CD4-positive, alpha-beta T cell (primary cell): ENCODE measurements at regions of chr5 and their contacts with region 1.

Region 1: DNA sequence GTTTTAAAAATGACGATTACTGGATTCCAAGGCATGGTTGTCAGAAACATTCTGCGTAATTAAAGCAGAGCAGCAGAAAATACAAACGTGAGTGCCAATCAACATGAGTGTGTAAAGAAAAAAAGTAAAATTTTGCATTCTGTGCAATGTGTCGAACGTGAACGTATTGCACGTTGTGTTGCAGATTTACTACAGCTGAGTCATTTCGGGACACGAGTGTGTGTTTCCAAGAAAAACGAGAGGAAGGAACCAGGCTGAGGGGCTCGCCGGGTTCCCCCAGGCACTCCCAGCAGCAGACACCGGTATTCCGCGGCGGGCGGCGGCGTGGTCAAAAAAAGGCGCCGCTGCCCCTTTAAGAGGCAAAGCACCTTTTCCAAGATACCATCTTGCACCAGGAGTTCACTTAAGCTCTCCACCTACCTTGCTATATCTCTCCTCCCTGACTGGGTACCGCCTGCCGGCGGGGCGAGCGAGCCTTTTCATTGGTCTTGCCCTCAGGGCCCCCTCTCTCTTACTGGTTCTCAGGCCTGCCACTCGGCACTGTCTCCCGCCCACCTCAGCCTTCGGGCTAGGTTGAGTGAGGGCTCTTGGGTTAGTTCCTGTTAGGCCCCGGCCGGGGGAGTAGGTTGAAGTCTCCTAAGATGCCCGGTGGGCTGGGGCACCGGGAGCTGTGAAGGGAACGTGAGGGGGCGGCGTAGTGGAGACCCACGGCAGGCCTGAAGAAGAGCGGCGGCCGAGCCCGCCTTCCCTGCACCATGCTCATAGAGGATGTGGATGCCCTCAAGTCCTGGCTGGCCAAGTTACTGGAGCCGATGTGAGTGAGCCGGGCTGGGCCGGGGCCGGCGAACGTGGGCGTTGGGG is at the start of gene RBM27:
- DNase-seq: peak; percentile 94 to 98 (median 96)
- ATAC-seq: peak; percentile 99
- H3K4me3 ChIP-seq: peak within 1 kb of the TSS; percentile 94
- H3K4me3 Mint-ChIP-seq: no peak within 1 kb of the TSS
- H3K27ac ChIP-seq: peak within 1 kb of the TSS; percentile 69 to 80
- H3K27ac Mint-ChIP-seq: no peak within 1 kb of the TSS
- H3K4me1 ChIP-seq: peaks cover 22% of the 10 kb centered on the region
- H3K4me1 Mint-ChIP-seq: peaks cover 23% of the 10 kb centered on the region
- H3K27me3 ChIP-seq: no peaks in the 10 kb centered on the region
- H3K27me3 Mint-ChIP-seq: no peaks in the 10 kb centered on the region
- CTCF ChIP-seq: no peak
- total RNA-seq, gene RBM27: 29.7 to 33.2 TPM

Region 2: GRCh38 chr5:146173597-146173996 is 29.6 kb before region 1 on chr5:
- CTCF ChIA-PET with region 1: no interaction called
- POLR2A ChIA-PET with region 1: no interaction called
- intact Hi-C with region 1: no loop called
- DNase-seq: no peak
- ATAC-seq: no peak
- H3K4me3 ChIP-seq: no peak overlapping the region
- H3K4me3 Mint-ChIP-seq: no peak overlapping the region
- H3K27ac ChIP-seq: no peak overlapping the region
- H3K27ac Mint-ChIP-seq: peak overlapping the region; percentile 21
- H3K4me1 ChIP-seq: peaks cover 3% of the 10 kb centered on the region
- H3K4me1 Mint-ChIP-seq: peaks cover 8% of the 10 kb centered on the region
- H3K27me3 ChIP-seq: no peaks in the 10 kb centered on the region
- H3K27me3 Mint-ChIP-seq: no peaks in the 10 kb centered on the region
- CTCF ChIP-seq: no peak

Region 3: DNA sequence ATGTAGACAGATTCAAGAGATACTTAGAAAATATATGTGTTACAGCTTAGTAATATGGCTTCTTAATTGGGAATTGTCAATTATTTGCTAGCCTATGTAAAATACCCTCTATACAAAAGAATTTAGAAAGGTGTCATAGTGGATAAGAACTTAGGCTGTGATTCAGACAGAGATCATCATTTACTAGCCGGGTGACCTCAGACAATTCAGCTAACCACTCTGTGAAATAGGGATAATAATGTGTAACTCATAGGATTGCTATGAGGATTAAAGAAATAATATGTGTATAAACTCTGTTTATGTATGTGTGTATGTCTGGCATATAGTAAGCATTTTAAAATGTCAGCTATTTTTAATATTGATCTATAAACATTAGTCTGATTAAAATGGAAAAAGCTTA is 14.9 kb before region 1 on chr5:
- CTCF ChIA-PET with region 1: interaction called, 6 read pairs
- POLR2A ChIA-PET with region 1: interaction called, 25 read pairs
- intact Hi-C with region 1: no loop called
- DNase-seq: no peak
- ATAC-seq: no peak
- H3K4me3 ChIP-seq: no peak overlapping the region
- H3K4me3 Mint-ChIP-seq: no peak overlapping the region
- H3K27ac ChIP-seq: no peak overlapping the region
- H3K27ac Mint-ChIP-seq: no peak overlapping the region
- H3K4me1 ChIP-seq: peaks cover 4% of the 10 kb centered on the region
- H3K4me1 Mint-ChIP-seq: no peaks in the 10 kb centered on the region
- H3K27me3 ChIP-seq: no peaks in the 10 kb centered on the region
- H3K27me3 Mint-ChIP-seq: peaks cover 17% of the 10 kb centered on the region
- CTCF ChIP-seq: no peak

Region 4: GRCh38 chr5:146223179-146223578 is 19.9 kb after region 1 on chr5:
- CTCF ChIA-PET with region 1: no interaction called
- POLR2A ChIA-PET with region 1: interaction called, 3 read pairs
- intact Hi-C with region 1: loop called in 1 of 2 experiments (anchors 2 kb)
- DNase-seq: no peak
- ATAC-seq: no peak
- H3K4me3 ChIP-seq: no peak overlapping the region
- H3K4me3 Mint-ChIP-seq: no peak overlapping the region
- H3K27ac ChIP-seq: no peak overlapping the region
- H3K27ac Mint-ChIP-seq: no peak overlapping the region
- H3K4me1 ChIP-seq: no peaks in the 10 kb centered on the region
- H3K4me1 Mint-ChIP-seq: peaks cover 16% of the 10 kb centered on the region
- H3K27me3 ChIP-seq: no peaks in the 10 kb centered on the region
- H3K27me3 Mint-ChIP-seq: no peaks in the 10 kb centered on the region
- CTCF ChIP-seq: no peak